ENCODE measurements at regions of chr22 and their contacts with region 1.

Region 1: GRCh38 chr22:37807410-37808293 is at the start of gene GCAT:
- DNase-seq: peak; percentile 91
- ATAC-seq: peak; percentile 79
- H3K4me3 ChIP-seq: peak within 1 kb of the TSS; percentile 78 to 95 (median 93)
- H3K27ac ChIP-seq: peak within 1 kb of the TSS; percentile 77
- H3K4me1 ChIP-seq: peaks cover 33% of the 10 kb centered on the region
- H3K27me3 ChIP-seq: no peaks in the 10 kb centered on the region; a peak in 1 of 5 replicates
- CTCF ChIP-seq: peak; percentile 5; the same call in 1 of the 2 replicates
- EP300 ChIP-seq: no peak
- POLR2A ChIP-seq: peak; percentile 77 to 81
- RAD21 ChIP-seq: peak; percentile 43
- total RNA-seq, gene GCAT: 50.3 and 56.8 TPM in 2 replicates

Region 2: GRCh38 chr22:37658133-37659065 is 149.3 kb before region 1 on chr22 and contains the start of gene PDXP:
- CTCF ChIA-PET with region 1: no interaction called
- POLR2A ChIA-PET with region 1: interaction called, 15 read pairs
- in situ Hi-C with region 1: no loop called
- intact Hi-C with region 1: loop called (anchors 10 kb)
- DNase-seq: peak; percentile 99
- ATAC-seq: peak; percentile 94
- H3K4me3 ChIP-seq: peak within 1 kb of the TSS; percentile 75 to 97 (median 94)
- H3K27ac ChIP-seq: peak within 1 kb of the TSS; percentile 93
- H3K4me1 ChIP-seq: peaks cover 51% of the 10 kb centered on the region
- H3K27me3 ChIP-seq: no peaks in the 10 kb centered on the region; a peak in 1 of 5 replicates
- CTCF ChIP-seq: no peak
- EP300 ChIP-seq: no peak; a peak in 1 of 4 replicates
- POLR2A ChIP-seq: peak in 1 of 2 experiments; percentile 91
- RAD21 ChIP-seq: peak; percentile 55
- total RNA-seq, gene PDXP: 46.1 and 58.2 TPM in 2 replicates

Region 3: DNA sequence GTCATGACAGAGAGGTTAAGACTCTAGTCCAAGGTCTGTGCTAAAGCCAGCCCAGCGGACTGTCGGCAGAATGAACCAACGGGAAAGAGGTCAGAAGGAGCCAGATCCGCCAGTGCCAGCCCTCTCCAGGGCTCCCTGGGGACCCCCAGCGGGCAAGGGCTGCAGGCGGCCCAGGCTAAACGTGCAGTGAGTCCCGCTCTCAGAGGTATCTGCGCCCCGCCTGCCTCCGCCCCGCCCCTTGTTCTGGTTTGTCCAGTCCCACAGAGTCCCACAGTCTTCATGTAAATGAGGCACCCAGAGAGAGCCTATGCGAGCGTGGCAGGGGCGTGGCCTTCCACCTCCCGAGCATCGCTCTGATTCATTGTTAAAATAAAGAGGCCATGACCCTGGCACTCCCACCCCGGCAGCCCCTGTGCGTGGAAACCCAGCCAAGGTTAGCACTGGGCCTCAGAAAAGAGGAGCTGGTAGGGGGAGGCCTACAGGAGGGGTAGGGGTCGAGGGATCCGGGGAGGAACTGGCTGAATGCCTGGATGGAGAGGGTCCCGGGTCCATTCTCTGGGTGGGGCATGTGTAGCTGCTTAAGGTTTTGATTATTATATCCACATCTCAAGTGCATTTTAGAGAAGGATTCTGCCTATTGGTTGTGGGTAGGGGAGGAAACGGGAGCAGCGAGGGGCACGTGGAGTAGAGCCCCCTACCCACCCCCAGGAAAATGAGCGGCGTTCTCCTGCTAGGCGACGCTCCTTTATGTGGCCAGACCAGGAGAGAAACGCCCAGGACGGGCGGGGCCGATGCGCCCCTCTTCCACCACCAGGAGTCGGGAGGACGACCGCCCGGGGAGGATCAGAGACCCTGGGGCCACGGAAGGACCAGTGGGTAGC is 110.8 kb before region 1 on chr22 and contains the start of gene TRIOBP:
- CTCF ChIA-PET with region 1: no interaction called
- POLR2A ChIA-PET with region 1: no interaction called
- in situ Hi-C with region 1: no loop called
- intact Hi-C with region 1: no loop called
- DNase-seq: no peak
- ATAC-seq: peak; percentile 53; the same call in 2 of the 3 replicates
- H3K4me3 ChIP-seq: no peak within 1 kb of the TSS
- H3K27ac ChIP-seq: no peak within 1 kb of the TSS
- H3K4me1 ChIP-seq: no peaks in the 10 kb centered on the region
- H3K27me3 ChIP-seq: no peaks in the 10 kb centered on the region
- CTCF ChIP-seq: no peak
- EP300 ChIP-seq: no peak
- POLR2A ChIP-seq: no peak
- RAD21 ChIP-seq: no peak
- total RNA-seq, gene TRIOBP: 11.3 and 15.4 TPM in 2 replicates

Region 4: GRCh38 chr22:37734964-37735451 is 72.6 kb before region 1 on chr22:
- CTCF ChIA-PET with region 1: no interaction called
- POLR2A ChIA-PET with region 1: interaction called, 24 read pairs
- in situ Hi-C with region 1: no loop called
- intact Hi-C with region 1: no loop called
- DNase-seq: peak; percentile 72
- ATAC-seq: peak; percentile 86
- H3K4me3 ChIP-seq: peak overlapping the region; percentile 43 to 61 (median 49); a peak in 4 of 6 replicates
- H3K27ac ChIP-seq: peak overlapping the region; percentile 31
- H3K4me1 ChIP-seq: peaks cover 79% of the 10 kb centered on the region
- H3K27me3 ChIP-seq: no peaks in the 10 kb centered on the region
- CTCF ChIP-seq: peak; percentile 96
- EP300 ChIP-seq: no peak
- POLR2A ChIP-seq: no peak
- RAD21 ChIP-seq: peak; percentile 90

Region 5: GRCh38 chr22:37781479-37781911 is 26.2 kb before region 1 on chr22:
- CTCF ChIA-PET with region 1: no interaction called
- POLR2A ChIA-PET with region 1: interaction called, 127 read pairs
- in situ Hi-C with region 1: no loop called
- intact Hi-C with region 1: loop called (anchors 2 kb)
- DNase-seq: peak; percentile 42
- ATAC-seq: peak; percentile 60
- H3K4me3 ChIP-seq: peak overlapping the region in 1 of 3 experiments; percentile 60; a peak in 1 of 6 replicates
- H3K27ac ChIP-seq: no peak overlapping the region
- H3K4me1 ChIP-seq: peaks cover 84% of the 10 kb centered on the region
- H3K27me3 ChIP-seq: no peaks in the 10 kb centered on the region
- CTCF ChIP-seq: peak; percentile 68
- EP300 ChIP-seq: no peak
- POLR2A ChIP-seq: no peak
- RAD21 ChIP-seq: 0 out of 2 replicates have a peak, but pooled peaks have one; percentile 44

Region 6: GRCh38 chr22:37817705-37818408 is 10.2 kb after region 1 on chr22:
- CTCF ChIA-PET with region 1: no interaction called
- POLR2A ChIA-PET with region 1: interaction called, 67 read pairs
- in situ Hi-C with region 1: no loop called
- intact Hi-C with region 1: no loop called
- DNase-seq: peak; percentile 86
- ATAC-seq: peak; percentile 70
- H3K4me3 ChIP-seq: peak overlapping the region; percentile 29 to 63 (median 35); a peak in 4 of 6 replicates
- H3K27ac ChIP-seq: peak overlapping the region; percentile 72
- H3K4me1 ChIP-seq: peaks cover 50% of the 10 kb centered on the region
- H3K27me3 ChIP-seq: no peaks in the 10 kb centered on the region
- CTCF ChIP-seq: peak; percentile 100
- EP300 ChIP-seq: peak in 1 of 2 experiments; percentile 23; a peak in 1 of 4 replicates
- POLR2A ChIP-seq: peak in 1 of 2 experiments; percentile 63; a peak in 1 of 4 replicates
- RAD21 ChIP-seq: peak; percentile 98

Region 7: GRCh38 chr22:37862570-37863325 is 55.1 kb after region 1 on chr22:
- CTCF ChIA-PET with region 1: no interaction called
- POLR2A ChIA-PET with region 1: interaction called, 19 read pairs
- in situ Hi-C with region 1: no loop called
- intact Hi-C with region 1: no loop called
- DNase-seq: peak; percentile 20
- ATAC-seq: no peak
- H3K4me3 ChIP-seq: no peak overlapping the region
- H3K27ac ChIP-seq: peak overlapping the region; percentile 88
- H3K4me1 ChIP-seq: peaks cover 57% of the 10 kb centered on the region
- H3K27me3 ChIP-seq: no peaks in the 10 kb centered on the region
- CTCF ChIP-seq: no peak
- EP300 ChIP-seq: no peak
- POLR2A ChIP-seq: no peak
- RAD21 ChIP-seq: no peak

Region 8: DNA sequence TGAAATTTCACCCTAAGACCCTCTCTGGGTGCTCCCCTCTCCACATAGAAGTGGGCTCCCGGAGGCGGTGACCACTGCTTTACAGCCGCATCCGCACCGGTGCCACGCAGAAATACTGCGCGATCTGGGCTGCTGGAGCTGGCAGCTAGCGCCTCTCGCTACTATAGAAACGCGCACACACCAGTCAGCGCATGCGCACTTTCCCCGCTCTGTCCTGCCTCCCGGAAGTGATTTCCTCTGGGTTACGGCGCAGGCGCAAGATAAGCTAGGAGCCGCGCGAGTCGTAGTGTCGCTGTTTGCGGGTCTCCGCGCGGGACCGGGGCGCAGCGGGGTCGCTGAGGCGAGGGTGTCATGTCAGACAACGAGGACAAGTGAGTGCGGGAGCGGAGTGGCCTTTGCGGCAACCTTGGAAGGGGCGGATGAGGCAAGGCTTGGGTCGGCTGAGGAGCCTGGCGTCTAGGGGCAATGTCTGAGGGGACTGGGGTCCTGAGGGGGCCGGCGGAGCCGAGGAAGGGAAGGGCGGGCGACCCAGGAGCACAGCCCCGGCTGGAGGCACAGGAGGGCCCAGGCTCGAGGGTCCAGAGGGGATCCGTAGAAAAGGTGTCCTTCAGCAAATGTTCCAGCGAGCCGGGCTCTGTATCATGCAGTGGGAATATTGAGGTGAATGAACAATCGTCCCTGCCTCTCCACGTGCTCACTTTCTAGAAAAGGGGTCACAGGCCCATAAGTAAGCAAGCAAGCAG is 146.0 kb after region 1 on chr22 and contains the starts of genes C22orf23 and POLR2F:
- CTCF ChIA-PET with region 1: no interaction called
- POLR2A ChIA-PET with region 1: interaction called, 19 read pairs
- in situ Hi-C with region 1: no loop called
- intact Hi-C with region 1: no loop called
- DNase-seq: peak; percentile 92
- ATAC-seq: peak; percentile 89
- H3K4me3 ChIP-seq: peak within 1 kb of the TSS; percentile 75 to 98 (median 91)
- H3K27ac ChIP-seq: peak within 1 kb of the TSS; percentile 49
- H3K4me1 ChIP-seq: peaks cover 53% of the 10 kb centered on the region
- H3K27me3 ChIP-seq: no peaks in the 10 kb centered on the region; a peak in 1 of 5 replicates
- CTCF ChIP-seq: peak; percentile 43
- EP300 ChIP-seq: no peak
- POLR2A ChIP-seq: peak; percentile 52 to 89; a peak in 3 of 4 replicates
- RAD21 ChIP-seq: no peak
- total RNA-seq, gene C22orf23: 0.24 and 0.32 TPM in 2 replicates
- total RNA-seq, gene POLR2F: 135 and 147 TPM in 2 replicates

Measured in HepG2 (cell line).